Mucosa of descending colon (tissue), 3 donors: ENCODE measurements at regions of chr9 and their contacts with region 1.

Region 1: DNA sequence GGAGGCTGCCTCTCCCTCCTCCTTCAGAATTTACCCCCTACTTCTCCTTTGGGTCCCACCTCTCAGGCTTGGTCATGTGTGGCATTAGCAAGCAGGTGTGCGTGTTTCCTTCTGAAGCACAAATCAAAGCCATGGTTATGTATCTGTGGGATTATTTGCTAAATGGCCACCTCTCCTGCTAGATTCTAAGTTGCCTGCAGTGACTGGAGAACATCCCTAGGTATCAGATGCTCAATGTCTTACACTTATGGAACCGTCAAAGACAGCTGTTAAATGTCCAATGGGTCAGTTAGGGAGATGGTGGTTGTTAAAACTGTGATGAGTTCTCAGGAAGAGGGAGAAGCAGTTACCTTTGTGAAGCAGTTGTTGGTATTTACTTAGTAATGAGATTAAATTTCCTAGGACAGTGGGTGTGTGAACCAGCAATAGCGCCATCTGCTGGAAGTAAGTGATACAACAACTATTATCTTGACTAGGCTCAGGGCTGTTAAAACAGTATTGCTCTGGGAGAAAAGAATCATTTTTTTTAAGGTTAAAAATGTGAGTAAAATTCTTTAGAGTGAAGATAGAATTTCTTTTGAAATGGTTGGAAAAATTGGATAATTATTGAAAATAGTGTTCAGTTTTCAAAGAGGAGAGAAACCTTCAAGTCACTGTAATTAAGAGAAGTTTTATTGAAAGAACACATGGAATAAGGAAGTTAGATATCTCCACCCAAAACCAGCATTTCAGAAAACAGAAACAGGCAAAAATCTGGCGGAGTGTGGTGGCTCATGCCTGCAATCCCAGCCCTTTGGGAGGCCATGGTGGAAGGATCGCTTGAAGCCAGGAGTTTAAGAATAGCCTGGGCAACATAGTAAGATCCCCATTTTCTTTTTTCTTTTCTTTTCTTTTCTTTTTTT is 71.3 kb downstream of the TMC1 start:
- DNase-seq: peak in 1 of 3 donors; percentile 40
- ATAC-seq: peak; percentile 78
- H3K4me3 ChIP-seq: no peak overlapping the region
- H3K4me1 ChIP-seq: peaks cover 29% of the 10 kb centered on the region
- CTCF ChIP-seq: peak; percentile 63

Region 2: GRCh38 chr9:72292256-72292682 is 300.5 kb before region 1 on chr9:
- intact Hi-C with region 1: loop called (anchors 2 to 5 kb)
- DNase-seq: no peak
- ATAC-seq: no peak
- H3K4me3 ChIP-seq: no peak overlapping the region
- H3K4me1 ChIP-seq: peaks cover 7% of the 10 kb centered on the region
- CTCF ChIP-seq: no peak